Left ventricle myocardium inferior (tissue), 1 donor: ENCODE measurements at regions of chr12 and their contacts with region 1.

Region 1: GRCh38 chr12:5428332-5429221 is 3.3 kb upstream of the NTF3 start:
- DNase-seq: no peak
- H3K4me3 ChIP-seq: no peak overlapping the region
- H3K27ac ChIP-seq: no peak overlapping the region
- H3K4me1 ChIP-seq: peaks cover 42% of the 10 kb centered on the region
- H3K27me3 ChIP-seq: peaks cover 85% of the 10 kb centered on the region
- CTCF ChIP-seq: peak; percentile 70

Region 2: GRCh38 chr12:5200278-5201087 is 228.1 kb before region 1 on chr12:
- intact Hi-C with region 1: loop called (anchors 10 kb)
- DNase-seq: peak; percentile 53
- H3K4me3 ChIP-seq: no peak overlapping the region
- H3K27ac ChIP-seq: no peak overlapping the region
- H3K4me1 ChIP-seq: peaks cover 6% of the 10 kb centered on the region
- H3K27me3 ChIP-seq: peaks cover 42% of the 10 kb centered on the region
- CTCF ChIP-seq: peak; percentile 82

Region 3: DNA sequence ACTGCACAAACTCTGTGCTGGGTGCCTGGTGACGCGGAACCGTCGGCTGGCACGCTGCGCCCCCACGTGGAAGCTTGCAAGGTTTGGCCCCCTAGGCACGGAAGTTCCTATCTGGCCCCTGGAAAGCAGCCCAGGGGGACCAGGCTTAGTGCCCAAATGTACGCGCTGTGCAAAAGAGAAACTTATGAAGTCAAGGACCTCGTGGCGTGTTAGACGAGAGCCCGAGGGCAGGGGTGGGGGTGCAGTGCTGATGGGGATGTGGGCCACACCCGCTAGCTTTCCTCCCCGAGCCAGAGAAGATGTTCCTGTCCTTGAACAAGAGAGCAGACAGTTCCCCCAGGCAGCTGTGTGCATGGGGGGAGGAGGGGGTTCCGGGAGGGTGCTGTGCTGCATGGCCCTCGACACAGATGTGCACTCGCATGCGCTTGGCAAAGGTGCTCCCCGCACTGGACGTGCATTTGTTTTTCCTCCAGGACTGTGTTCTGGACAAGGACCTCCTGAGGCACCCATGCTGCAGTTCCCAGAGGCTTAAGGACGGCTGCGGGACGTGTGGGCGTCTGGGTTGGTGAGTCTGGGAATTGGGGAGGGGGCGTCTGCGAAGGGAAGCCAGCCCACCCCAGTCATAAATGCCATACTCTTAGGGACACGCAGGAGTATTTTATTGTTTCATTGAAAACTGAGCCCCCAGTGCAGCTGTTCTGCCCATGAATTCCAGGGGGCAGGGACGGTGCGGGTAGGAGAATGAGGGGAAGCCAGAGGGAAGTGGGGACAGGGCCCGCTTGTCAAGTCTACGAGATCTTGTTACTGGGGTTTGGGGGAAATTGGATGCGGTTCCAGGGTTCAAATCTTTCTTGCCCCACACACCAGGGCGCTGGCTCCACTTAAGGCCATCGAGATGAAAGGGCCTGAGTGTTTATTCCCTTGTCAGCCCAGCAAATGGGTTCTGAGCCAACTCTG is 83.3 kb after region 1 on chr12:
- intact Hi-C with region 1: loop called (anchors 10 kb)
- DNase-seq: peak; percentile 40
- H3K4me3 ChIP-seq: peak overlapping the region; percentile 35
- H3K27ac ChIP-seq: no peak overlapping the region
- H3K4me1 ChIP-seq: peaks cover 34% of the 10 kb centered on the region
- H3K27me3 ChIP-seq: peaks cover 44% of the 10 kb centered on the region
- CTCF ChIP-seq: peak; percentile 60

Region 4: DNA sequence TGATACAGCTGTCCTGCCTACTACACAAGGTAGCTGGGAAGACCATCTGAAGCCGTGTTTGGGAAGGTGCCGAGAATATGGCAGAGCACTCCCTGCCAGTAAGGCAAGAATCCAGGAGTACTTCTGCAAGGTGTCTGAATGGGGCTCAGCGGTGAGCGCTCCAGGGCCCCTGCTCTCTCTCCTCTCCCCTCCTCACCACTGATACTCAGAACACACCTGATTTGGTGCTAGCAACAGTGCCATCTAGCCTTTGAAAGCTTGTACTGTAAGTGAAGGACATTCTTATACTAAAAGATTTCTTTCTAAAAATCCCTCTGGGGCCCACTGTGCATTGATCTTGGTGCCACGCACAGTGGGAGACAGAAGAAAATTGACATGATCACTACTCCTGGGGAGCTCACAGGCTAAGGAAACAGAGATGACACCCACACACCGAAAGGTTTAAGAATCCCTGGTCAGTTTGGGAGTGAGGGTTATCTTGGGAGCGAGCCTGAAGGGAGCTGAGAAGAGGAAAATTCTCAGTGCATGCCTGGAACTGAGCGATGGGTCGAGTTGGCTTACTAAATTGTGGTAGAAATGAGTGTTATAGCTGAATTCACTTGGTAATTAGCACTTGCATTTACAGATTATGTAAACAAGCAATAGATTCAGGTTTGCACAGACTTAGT is 220.2 kb after region 1 on chr12:
- intact Hi-C with region 1: loop called (anchors 10 kb)
- DNase-seq: no peak
- H3K4me3 ChIP-seq: no peak overlapping the region
- H3K27ac ChIP-seq: no peak overlapping the region
- H3K4me1 ChIP-seq: peaks cover 9% of the 10 kb centered on the region
- H3K27me3 ChIP-seq: peaks cover 47% of the 10 kb centered on the region
- CTCF ChIP-seq: peak; percentile 67